OCI-LY7 (cell line): ENCODE measurements at regions of chr2 and their contacts with region 1.

Region 1: DNA sequence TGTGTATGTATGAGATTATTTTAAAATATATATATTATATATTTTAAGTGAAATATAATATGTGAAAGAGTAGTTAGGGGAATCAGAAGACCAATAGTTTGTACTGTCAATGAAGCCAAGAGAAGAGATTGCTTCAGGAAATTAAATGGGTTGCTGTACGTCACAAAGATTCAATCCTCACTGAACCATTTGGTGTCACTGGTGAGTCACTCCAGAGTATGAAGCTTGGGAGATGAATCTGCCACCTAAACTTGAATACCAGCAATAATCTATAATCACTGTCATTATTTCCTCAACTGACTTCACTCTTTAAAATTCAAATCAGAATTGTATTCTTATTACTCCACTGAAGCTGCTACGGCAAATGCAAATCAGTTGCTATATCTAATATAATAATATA is 41.9 kb upstream of the SCN9A start:
- DNase-seq: peak; percentile 10
- H3K4me3 ChIP-seq: no peak overlapping the region
- H3K27ac ChIP-seq: no peak overlapping the region
- H3K4me1 ChIP-seq: no peaks in the 10 kb centered on the region
- CTCF ChIP-seq: peak; percentile 61

Region 2: GRCh38 chr2:165927353-165927752 is 490.3 kb before region 1 on chr2:
- CTCF ChIA-PET with region 1: no interaction called
- POLR2A ChIA-PET with region 1: no interaction called
- intact Hi-C with region 1: no loop called
- DNase-seq: no peak
- H3K4me3 ChIP-seq: no peak overlapping the region
- H3K27ac ChIP-seq: no peak overlapping the region
- H3K4me1 ChIP-seq: no peaks in the 10 kb centered on the region
- CTCF ChIP-seq: no peak

Region 3: GRCh38 chr2:166360426-166360825 is 57.2 kb before region 1 on chr2:
- CTCF ChIA-PET with region 1: no interaction called
- POLR2A ChIA-PET with region 1: interaction called, 12 read pairs
- intact Hi-C with region 1: no loop called
- DNase-seq: no peak
- H3K4me3 ChIP-seq: no peak overlapping the region
- H3K27ac ChIP-seq: no peak overlapping the region
- H3K4me1 ChIP-seq: no peaks in the 10 kb centered on the region
- CTCF ChIP-seq: no peak